Activated CD8-positive, alpha-beta T cell treated with anti-CD3 and anti-CD28 coated beads for 36 hours (primary cell): ENCODE measurements at regions of chr10 and their contacts with region 1.

Region 1: GRCh38 chr10:70146489-70147258 is at the start of gene TYSND1:
- DNase-seq: peak; percentile 97
- ATAC-seq: peak; percentile 89
- H3K4me3 Mint-ChIP-seq: peak within 1 kb of the TSS; percentile 89
- H3K27ac Mint-ChIP-seq: peak within 1 kb of the TSS; percentile 95
- H3K4me1 Mint-ChIP-seq: peaks cover 35% of the 10 kb centered on the region
- H3K27me3 Mint-ChIP-seq: no peaks in the 10 kb centered on the region
- CTCF ChIP-seq: peak; percentile 41
- total RNA-seq, gene TYSND1: 20.0 to 20.3 TPM

Region 2: GRCh38 chr10:70132098-70133029 is 14.3 kb before region 1 on chr10 and contains the start of gene AIFM2:
- CTCF ChIA-PET with region 1: interaction called, 37 read pairs
- POLR2A ChIA-PET with region 1: interaction called, 38 read pairs
- intact Hi-C with region 1: no loop called
- DNase-seq: peak; percentile 55
- ATAC-seq: peak; percentile 88
- H3K4me3 Mint-ChIP-seq: peak within 1 kb of the TSS; percentile 80
- H3K27ac Mint-ChIP-seq: peak within 1 kb of the TSS; percentile 93
- H3K4me1 Mint-ChIP-seq: peaks cover 22% of the 10 kb centered on the region
- H3K27me3 Mint-ChIP-seq: no peaks in the 10 kb centered on the region
- CTCF ChIP-seq: no peak
- total RNA-seq, gene AIFM2: 6.3 to 8.2 TPM

Region 3: GRCh38 chr10:70169649-70170364 is 23.1 kb after region 1 on chr10:
- CTCF ChIA-PET with region 1: interaction called, 60 read pairs
- POLR2A ChIA-PET with region 1: interaction called, 38 read pairs
- intact Hi-C with region 1: no loop called
- DNase-seq: peak; percentile 45
- ATAC-seq: peak; percentile 9
- H3K4me3 Mint-ChIP-seq: peak overlapping the region; percentile 92
- H3K27ac Mint-ChIP-seq: peak overlapping the region; percentile 96
- H3K4me1 Mint-ChIP-seq: peaks cover 60% of the 10 kb centered on the region
- H3K27me3 Mint-ChIP-seq: no peaks in the 10 kb centered on the region
- CTCF ChIP-seq: no peak

Region 4: GRCh38 chr10:70221030-70221429 is 74.4 kb after region 1 on chr10:
- CTCF ChIA-PET with region 1: interaction called, 19 read pairs
- POLR2A ChIA-PET with region 1: interaction called, 4 read pairs
- intact Hi-C with region 1: no loop called
- DNase-seq: no peak
- ATAC-seq: no peak
- H3K4me3 Mint-ChIP-seq: no peak overlapping the region
- H3K27ac Mint-ChIP-seq: peak overlapping the region; percentile 47
- H3K4me1 Mint-ChIP-seq: peaks cover 31% of the 10 kb centered on the region
- H3K27me3 Mint-ChIP-seq: no peaks in the 10 kb centered on the region
- CTCF ChIP-seq: no peak